ENCODE measurements at regions of chr6 and their contacts with region 1.

Region 1: GRCh38 chr6:138088330-138088766 is 18.9 kb downstream of the PERP start:
- DNase-seq: peak; percentile 68
- H3K4me3 Mint-ChIP-seq: peak overlapping the region; percentile 43
- H3K27ac Mint-ChIP-seq: peak overlapping the region; percentile 92
- H3K4me1 Mint-ChIP-seq: peaks cover 31% of the 10 kb centered on the region
- H3K27me3 Mint-ChIP-seq: no peaks in the 10 kb centered on the region
- CTCF ChIP-seq: no peak

Region 2: GRCh38 chr6:138001750-138002349 is 86.5 kb before region 1 on chr6:
- CTCF ChIA-PET with region 1: interaction called, 6 read pairs
- intact Hi-C with region 1: loop called (anchors 5 kb)
- DNase-seq: peak; percentile 65
- H3K4me3 Mint-ChIP-seq: no peak overlapping the region
- H3K27ac Mint-ChIP-seq: no peak overlapping the region
- H3K4me1 Mint-ChIP-seq: peaks cover 4% of the 10 kb centered on the region
- H3K27me3 Mint-ChIP-seq: no peaks in the 10 kb centered on the region
- CTCF ChIP-seq: peak; percentile 62

Region 3: GRCh38 chr6:138036111-138036510 is 52.2 kb before region 1 on chr6:
- CTCF ChIA-PET with region 1: no interaction called
- intact Hi-C with region 1: loop called (anchors 5 kb)
- DNase-seq: peak; percentile 68
- H3K4me3 Mint-ChIP-seq: no peak overlapping the region
- H3K27ac Mint-ChIP-seq: no peak overlapping the region
- H3K4me1 Mint-ChIP-seq: peaks cover 26% of the 10 kb centered on the region
- H3K27me3 Mint-ChIP-seq: no peaks in the 10 kb centered on the region
- CTCF ChIP-seq: no peak

Region 4: DNA sequence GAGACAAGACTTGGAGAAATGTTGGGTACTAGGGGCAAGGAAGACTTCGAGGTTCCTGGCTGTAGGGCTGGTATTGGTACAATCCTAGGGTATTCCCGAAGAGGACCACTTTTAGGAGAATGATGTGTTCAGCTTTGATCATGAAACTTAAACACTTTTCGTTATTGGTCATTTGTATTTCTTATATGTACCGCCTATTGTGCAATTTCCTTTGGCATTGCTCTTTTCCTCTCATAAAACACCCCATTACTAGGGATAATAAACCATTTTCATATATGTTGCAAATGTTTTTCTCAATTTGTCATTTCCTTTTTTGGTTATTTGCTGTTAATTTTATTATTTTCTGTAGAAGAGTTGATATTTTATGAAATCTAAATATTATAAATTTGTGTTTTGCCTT is 54.5 kb after region 1 on chr6:
- CTCF ChIA-PET with region 1: no interaction called
- intact Hi-C with region 1: no loop called
- DNase-seq: no peak
- H3K4me3 Mint-ChIP-seq: no peak overlapping the region
- H3K27ac Mint-ChIP-seq: no peak overlapping the region
- H3K4me1 Mint-ChIP-seq: no peaks in the 10 kb centered on the region
- H3K27me3 Mint-ChIP-seq: no peaks in the 10 kb centered on the region
- CTCF ChIP-seq: no peak

Region 5: GRCh38 chr6:138188278-138188941 is 100.1 kb after region 1 on chr6:
- CTCF ChIA-PET with region 1: no interaction called
- intact Hi-C with region 1: no loop called
- DNase-seq: peak; percentile 19
- H3K4me3 Mint-ChIP-seq: no peak overlapping the region
- H3K27ac Mint-ChIP-seq: no peak overlapping the region
- H3K4me1 Mint-ChIP-seq: peaks cover 15% of the 10 kb centered on the region
- H3K27me3 Mint-ChIP-seq: no peaks in the 10 kb centered on the region
- CTCF ChIP-seq: no peak